AG04449 (cell line): ENCODE measurements at regions of chr3 and their contacts with region 1.

Region 1: DNA sequence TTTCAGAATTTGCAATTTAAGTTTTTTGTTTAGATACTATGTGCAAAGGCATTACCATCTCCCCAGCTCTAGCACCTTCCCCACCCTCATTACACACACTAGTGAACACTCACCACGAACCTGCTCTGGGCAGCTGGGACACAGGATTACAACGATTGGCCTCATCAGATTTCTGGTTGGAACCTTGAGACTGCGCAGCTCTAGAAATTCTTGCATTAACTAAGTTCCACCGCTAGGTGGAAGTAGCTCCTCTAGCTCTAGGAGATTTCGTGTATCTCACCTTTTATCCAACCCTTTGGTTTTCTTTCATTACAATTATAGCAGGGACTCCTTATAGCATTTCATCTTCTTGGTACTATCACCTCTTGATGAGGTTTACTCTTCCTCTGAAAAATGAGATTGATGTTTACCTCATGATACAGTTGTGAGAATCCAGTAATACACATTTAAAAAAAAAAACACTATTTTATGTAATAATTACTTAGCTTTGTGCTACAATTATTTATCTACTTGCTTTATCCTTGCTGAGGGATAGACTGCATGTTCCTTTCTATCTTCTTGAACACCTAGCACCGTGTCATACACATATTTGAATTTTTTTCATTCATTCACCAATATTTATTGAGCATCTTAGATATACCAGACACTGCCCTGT is 28.7 kb upstream of the PLOD2 start:
- DNase-seq: no peak
- H3K4me3 ChIP-seq: no peak overlapping the region
- CTCF ChIP-seq: peak; percentile 57

Region 2: DNA sequence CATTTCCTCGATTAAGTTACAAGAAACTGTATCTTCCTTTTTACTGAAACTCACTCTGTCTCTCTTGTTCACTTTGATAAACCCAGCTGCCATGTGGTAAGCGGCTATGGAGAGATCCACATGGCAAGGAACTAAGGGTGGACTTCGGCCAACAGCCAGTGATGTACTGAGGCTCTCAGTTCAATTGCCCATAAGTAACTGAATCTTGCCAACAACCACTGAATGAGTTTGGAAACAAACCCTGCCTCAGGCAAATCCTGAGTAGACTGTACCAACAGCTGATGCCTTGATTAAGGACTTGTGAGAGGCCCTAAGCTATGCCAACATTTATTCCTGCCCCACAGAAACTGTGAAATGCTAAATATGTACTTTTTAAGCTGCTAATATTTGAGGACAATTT is 462.2 kb before region 1 on chr3:
- CTCF ChIA-PET with region 1: no interaction called
- POLR2A ChIA-PET with region 1: no interaction called
- DNase-seq: no peak
- H3K4me3 ChIP-seq: no peak overlapping the region
- CTCF ChIP-seq: no peak

Region 3: DNA sequence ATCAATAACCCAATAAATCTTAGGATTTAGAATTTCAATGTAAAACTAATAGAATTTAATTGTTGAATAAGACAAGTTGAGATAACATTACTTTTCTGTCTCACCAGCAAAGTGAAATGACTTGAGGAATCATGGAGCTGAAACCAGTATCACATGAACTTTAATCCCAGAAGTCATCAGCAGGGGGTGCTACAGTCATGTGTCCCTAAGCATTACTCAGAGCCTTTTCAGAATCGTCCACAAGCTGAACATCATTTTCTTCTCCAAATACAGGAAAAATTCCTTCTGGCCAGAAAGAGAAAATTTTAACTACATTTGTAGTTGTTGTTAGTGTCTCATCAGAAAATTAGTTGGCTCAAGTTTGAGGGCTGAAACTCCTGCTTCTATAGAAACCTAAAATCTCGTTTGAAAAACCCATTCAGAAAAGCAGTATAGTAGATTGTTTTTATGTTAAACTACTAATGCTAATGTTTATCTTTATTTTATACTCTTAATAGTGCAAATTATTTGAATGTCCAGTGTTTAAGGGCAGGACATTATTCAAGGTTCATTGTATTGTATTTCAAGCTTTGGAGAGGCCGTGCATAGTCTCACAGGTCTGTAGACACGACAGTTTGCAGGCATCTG is 412.8 kb before region 1 on chr3:
- CTCF ChIA-PET with region 1: interaction called, 65 read pairs
- POLR2A ChIA-PET with region 1: no interaction called
- DNase-seq: no peak
- H3K4me3 ChIP-seq: no peak overlapping the region
- CTCF ChIP-seq: peak; percentile 58

Region 4: DNA sequence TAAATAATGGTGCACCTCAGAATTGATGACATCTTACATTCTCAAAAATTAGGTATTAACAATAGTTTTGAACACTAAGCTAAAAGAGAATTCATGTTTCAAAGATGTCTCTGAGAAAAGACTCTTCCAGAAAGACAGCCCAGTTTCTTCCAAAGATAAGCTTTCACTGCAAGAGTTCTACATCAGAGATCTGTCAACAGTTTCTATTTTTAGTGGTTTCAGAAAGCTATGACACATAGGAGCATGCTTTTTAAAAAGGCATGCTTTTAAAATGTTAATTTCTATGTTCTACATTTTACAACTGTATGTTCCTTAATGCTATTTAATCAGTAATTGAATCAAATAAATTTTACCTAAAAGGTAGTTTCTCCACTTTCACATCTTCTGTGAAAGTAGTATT is 116.8 kb before region 1 on chr3:
- CTCF ChIA-PET with region 1: interaction called, 22 read pairs
- POLR2A ChIA-PET with region 1: no interaction called
- DNase-seq: no peak
- H3K4me3 ChIP-seq: no peak overlapping the region
- CTCF ChIP-seq: no peak

Region 5: DNA sequence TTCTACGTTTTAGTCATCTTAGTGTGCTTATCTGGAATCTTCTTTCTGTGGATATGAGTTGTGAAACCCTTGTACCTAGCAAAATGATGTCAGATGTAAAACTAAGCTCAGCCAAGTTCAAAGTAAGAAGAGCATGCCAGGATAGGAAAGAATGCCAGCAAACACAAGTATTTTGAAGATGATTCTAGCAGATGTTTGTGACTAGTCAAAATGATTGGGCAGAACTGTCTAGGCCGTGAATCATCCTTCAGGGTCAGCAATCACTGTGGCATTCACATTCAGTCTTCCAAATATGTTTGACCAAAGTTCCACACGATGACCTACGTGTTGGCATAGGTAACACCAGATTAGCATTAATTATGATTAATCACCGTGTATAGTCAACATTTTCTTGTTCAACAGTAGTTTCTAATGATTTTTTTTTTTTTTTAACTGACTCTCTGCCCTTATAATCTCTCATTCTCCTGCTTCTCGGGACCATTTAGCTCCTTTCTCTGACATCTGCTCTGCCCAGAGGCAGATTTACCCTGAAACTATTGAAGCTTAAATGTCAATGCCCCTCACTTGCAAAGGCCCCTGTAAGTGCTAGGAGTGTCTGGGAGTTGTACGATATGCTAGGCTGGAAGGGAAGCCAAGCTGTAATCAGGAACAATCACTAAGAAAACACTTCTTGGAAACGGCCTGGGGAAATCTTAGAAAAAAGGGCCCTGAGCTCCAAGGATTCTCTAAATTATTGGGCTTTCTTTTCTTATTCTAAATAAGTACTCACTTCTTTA is 23.0 kb before region 1 on chr3:
- CTCF ChIA-PET with region 1: interaction called, 43 read pairs
- POLR2A ChIA-PET with region 1: interaction called, 4 read pairs
- DNase-seq: peak; percentile 85
- H3K4me3 ChIP-seq: no peak overlapping the region
- CTCF ChIP-seq: no peak

Region 6: GRCh38 chr3:146218880-146219866 is 29.5 kb after region 1 on chr3:
- CTCF ChIA-PET with region 1: interaction called, 19 read pairs
- POLR2A ChIA-PET with region 1: no interaction called
- DNase-seq: no peak
- H3K4me3 ChIP-seq: no peak overlapping the region
- CTCF ChIP-seq: no peak

Region 7: DNA sequence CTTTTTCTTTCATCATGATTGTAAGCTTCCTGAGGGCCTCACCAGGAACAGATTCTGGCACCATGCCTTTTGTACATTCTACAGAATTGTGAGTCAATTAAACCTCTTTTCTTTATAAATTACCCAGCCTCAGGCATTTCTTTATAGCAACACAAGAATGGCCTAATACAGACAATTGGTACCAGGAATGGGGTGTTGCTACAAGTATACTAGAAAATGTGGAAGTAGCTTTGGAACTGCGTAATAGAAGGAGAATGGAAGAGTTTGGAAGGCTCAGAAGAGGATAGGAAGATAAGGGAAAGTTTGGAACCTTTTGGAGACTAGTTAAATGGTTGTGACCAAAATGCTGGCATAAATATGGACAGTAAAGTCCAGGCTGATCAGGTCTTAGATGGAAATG is 170.2 kb after region 1 on chr3:
- CTCF ChIA-PET with region 1: no interaction called
- POLR2A ChIA-PET with region 1: no interaction called
- DNase-seq: no peak
- H3K4me3 ChIP-seq: no peak overlapping the region
- CTCF ChIP-seq: no peak

Region 8: GRCh38 chr3:146577662-146578061 is 388.0 kb after region 1 on chr3:
- CTCF ChIA-PET with region 1: interaction called, 45 read pairs
- POLR2A ChIA-PET with region 1: no interaction called
- DNase-seq: no peak
- H3K4me3 ChIP-seq: no peak overlapping the region
- CTCF ChIP-seq: no peak

Region 9: DNA sequence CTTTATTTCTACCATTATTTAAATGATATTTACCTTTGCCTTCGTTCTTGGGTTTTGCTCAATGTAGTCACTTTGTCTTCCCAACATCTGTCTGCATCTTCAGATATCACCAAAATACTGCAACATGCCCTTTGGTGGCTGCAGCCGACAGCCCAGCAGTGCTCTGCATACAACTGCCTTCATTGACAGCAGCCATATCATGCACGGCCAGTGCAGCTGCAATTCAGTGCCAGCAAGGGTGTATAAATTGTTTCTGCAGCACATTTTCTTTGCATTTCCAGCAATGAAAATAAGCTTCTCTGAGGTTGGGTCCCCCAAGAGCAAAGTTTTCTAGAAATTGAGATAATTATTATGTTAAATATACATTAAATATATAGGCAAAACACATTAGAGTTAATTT is 421.4 kb after region 1 on chr3:
- CTCF ChIA-PET with region 1: no interaction called
- POLR2A ChIA-PET with region 1: no interaction called
- DNase-seq: no peak
- H3K4me3 ChIP-seq: no peak overlapping the region
- CTCF ChIP-seq: no peak